Heart right ventricle (tissue), 16 donors: ENCODE measurements at regions of chr4 and their contacts with region 1.

Region 1: GRCh38 chr4:80072744-80073472 is at the start of gene ANTXR2:
- DNase-seq: peak; percentile 87 to 94
- ATAC-seq: peak; percentile 94 to 100 (median 96)
- H3K4me3 ChIP-seq: peak within 1 kb of the TSS; percentile 70 to 97 (median 91)
- H3K27ac ChIP-seq: peak within 1 kb of the TSS; percentile 85 to 97 (median 93)
- H3K4me1 ChIP-seq: peaks cover 0 to 79% (median 27%) of the 10 kb centered on the region in 9 donors
- H3K27me3 ChIP-seq: no peaks in the 10 kb centered on the region
- CTCF ChIP-seq: peak in 4 of 9 donors; percentile 14 to 36 (median 24)
- total RNA-seq, gene ANTXR2: 37.2 to 68.4 (median 49.8) TPM

Region 2: GRCh38 chr4:79917246-79917645 is 155.7 kb before region 1 on chr4:
- intact Hi-C with region 1: loop called in 1 of 10 experiments (anchors 10 kb)
- DNase-seq: peak; percentile 5 to 9
- ATAC-seq: peak in 1 of 8 donors; percentile 45
- H3K4me3 ChIP-seq: no peak overlapping the region
- H3K27ac ChIP-seq: no peak overlapping the region
- H3K4me1 ChIP-seq: peaks cover 0 to 9% (median 0%) of the 10 kb centered on the region in 9 donors
- H3K27me3 ChIP-seq: no peaks in the 10 kb centered on the region
- CTCF ChIP-seq: peak; percentile 13 to 68 (median 51)

Region 3: DNA sequence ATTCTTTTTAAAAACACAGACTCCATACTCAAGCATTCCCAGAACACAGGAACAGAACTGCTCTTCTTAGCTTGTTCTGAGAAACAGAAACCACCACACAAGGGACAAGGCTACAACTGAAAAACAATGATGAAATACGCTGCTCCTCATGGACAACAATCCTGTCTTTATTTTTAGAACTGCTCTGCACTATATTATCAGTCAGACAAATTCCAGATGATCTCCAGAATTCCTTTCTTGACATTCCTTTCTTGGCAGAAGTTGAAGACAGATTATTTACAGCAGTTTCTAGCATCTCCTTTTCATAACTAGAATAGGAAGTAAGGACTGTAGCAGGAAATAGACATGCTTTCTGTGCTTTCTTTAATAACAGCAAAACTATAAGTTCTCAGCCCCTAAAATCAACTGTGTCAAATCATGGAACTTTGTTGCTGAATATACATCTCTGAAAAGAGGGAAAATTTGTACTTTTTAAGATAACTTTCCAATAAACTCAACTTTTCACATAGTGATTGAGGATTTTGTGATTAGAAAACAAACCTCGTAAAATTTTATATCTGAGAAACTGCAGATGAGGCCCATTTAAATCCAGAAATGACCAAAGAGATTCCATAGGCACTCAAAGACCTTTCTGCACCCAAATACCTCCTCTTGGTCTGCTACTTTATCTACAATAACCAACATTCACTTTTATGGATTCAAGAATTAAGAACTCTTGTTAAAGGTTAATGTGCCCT is 35.8 kb before region 1 on chr4:
- intact Hi-C with region 1: loop called in 1 of 10 experiments (anchors 5 kb)
- DNase-seq: peak in 1 of 2 donors; percentile 11
- ATAC-seq: peak; percentile 91 to 96 (median 94)
- H3K4me3 ChIP-seq: peak overlapping the region in 6 of 10 donors; percentile 1 to 34 (median 18)
- H3K27ac ChIP-seq: peak overlapping the region; percentile 41 to 84 (median 80)
- H3K4me1 ChIP-seq: peaks cover 0 to 41% (median 30%) of the 10 kb centered on the region in 9 donors
- H3K27me3 ChIP-seq: no peaks in the 10 kb centered on the region
- CTCF ChIP-seq: no peak

Region 4: GRCh38 chr4:80184053-80184790 is 111.3 kb after region 1 on chr4:
- intact Hi-C with region 1: loop called in 3 of 10 experiments (anchors 2 to 5 kb)
- DNase-seq: peak; percentile 85 to 91
- ATAC-seq: peak; percentile 95 to 98 (median 96)
- H3K4me3 ChIP-seq: peak overlapping the region; percentile 11 to 80 (median 61)
- H3K27ac ChIP-seq: peak overlapping the region in 8 of 10 donors; percentile 31 to 90 (median 64)
- H3K4me1 ChIP-seq: peaks cover 3 to 38% (median 29%) of the 10 kb centered on the region in 9 donors
- H3K27me3 ChIP-seq: peaks cover 0 to 65% (median 45%) of the 10 kb centered on the region in 7 donors
- CTCF ChIP-seq: peak; percentile 60 to 99 (median 91)

Region 5: GRCh38 chr4:80215449-80216052 is 142.6 kb after region 1 on chr4:
- intact Hi-C with region 1: loop called in 1 of 10 experiments (anchors 10 kb)
- DNase-seq: no peak
- ATAC-seq: peak in 1 of 8 donors; percentile 33
- H3K4me3 ChIP-seq: no peak overlapping the region
- H3K27ac ChIP-seq: no peak overlapping the region
- H3K4me1 ChIP-seq: peaks cover 0 to 6% (median 0%) of the 10 kb centered on the region in 9 donors
- H3K27me3 ChIP-seq: peaks cover 0 to 50% (median 23%) of the 10 kb centered on the region in 7 donors
- CTCF ChIP-seq: peak; percentile 37 to 83 (median 75)